ENCODE measurements at regions of chr3 and their contacts with region 1.

Region 1: DNA sequence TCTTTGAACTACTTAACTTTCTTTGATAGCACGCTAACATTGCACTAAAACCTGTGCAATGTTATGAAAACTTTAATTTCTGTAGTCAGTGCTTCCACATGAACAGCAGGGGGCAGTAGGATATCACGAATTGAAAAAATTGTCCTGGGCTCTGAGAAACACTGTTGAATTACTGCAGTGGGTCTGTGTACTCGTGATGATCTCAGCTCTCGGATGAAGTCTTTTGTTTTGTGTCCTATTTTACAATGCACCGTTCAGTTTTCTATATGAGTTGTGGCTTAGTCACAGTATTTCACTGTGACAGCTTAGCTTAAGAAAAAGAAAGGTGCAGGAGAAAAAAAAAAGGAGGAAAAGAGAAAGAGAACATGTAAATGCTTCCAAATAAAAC is 141.3 kb upstream of the CCDC54 start:
- DNase-seq: peak; percentile 74
- H3K4me3 ChIP-seq: peak overlapping the region; percentile 52
- H3K27ac ChIP-seq: no peak overlapping the region
- H3K27me3 ChIP-seq: no peaks in the 10 kb centered on the region
- CTCF ChIP-seq: peak; percentile 80

Region 2: GRCh38 chr3:107028086-107028485 is 207.8 kb before region 1 on chr3:
- CTCF ChIA-PET with region 1: no interaction called
- POLR2A ChIA-PET with region 1: no interaction called
- DNase-seq: no peak
- H3K4me3 ChIP-seq: no peak overlapping the region
- H3K27ac ChIP-seq: no peak overlapping the region
- H3K27me3 ChIP-seq: no peaks in the 10 kb centered on the region
- CTCF ChIP-seq: no peak

Region 3: DNA sequence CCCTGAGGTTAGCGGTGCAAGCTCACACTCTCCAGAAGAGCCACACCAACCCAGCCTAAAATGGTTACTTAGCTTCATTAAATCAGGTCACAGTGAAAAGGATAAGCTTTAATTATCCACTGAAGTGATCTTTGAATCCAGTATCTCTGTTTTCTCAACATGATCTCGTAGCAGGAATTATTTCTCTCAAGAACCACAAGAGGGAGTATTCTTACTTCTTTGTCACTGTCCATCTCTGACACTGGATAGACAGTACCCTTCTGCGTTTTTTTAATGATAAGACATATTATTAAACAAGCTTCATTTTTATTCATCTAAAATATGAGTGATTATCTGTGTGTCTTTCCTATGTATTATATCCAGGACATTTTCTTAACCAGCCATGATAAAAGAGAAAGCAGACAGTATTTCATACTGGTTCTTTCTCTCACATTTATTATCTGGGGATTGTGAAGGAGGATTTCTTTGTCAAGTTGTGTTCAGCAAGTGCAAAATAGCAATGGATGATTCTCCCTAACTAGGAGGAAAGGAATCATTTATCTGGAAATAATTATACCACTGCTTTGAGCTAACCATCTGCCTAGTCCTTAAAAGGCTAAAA is 36.0 kb after region 1 on chr3:
- CTCF ChIA-PET with region 1: interaction called, 30 read pairs
- POLR2A ChIA-PET with region 1: no interaction called
- DNase-seq: no peak
- H3K4me3 ChIP-seq: no peak overlapping the region
- H3K27ac ChIP-seq: no peak overlapping the region
- H3K27me3 ChIP-seq: no peaks in the 10 kb centered on the region
- CTCF ChIP-seq: peak; percentile 68

Region 4: GRCh38 chr3:107438067-107438466 is 202.1 kb after region 1 on chr3:
- CTCF ChIA-PET with region 1: no interaction called
- POLR2A ChIA-PET with region 1: no interaction called
- DNase-seq: no peak
- H3K4me3 ChIP-seq: no peak overlapping the region
- H3K27ac ChIP-seq: no peak overlapping the region
- H3K27me3 ChIP-seq: no peaks in the 10 kb centered on the region
- CTCF ChIP-seq: no peak

Region 5: GRCh38 chr3:107660306-107660976 is 424.5 kb after region 1 on chr3:
- CTCF ChIA-PET with region 1: interaction called, 21 read pairs
- POLR2A ChIA-PET with region 1: no interaction called
- DNase-seq: no peak
- H3K4me3 ChIP-seq: no peak overlapping the region
- H3K27ac ChIP-seq: no peak overlapping the region
- H3K27me3 ChIP-seq: no peaks in the 10 kb centered on the region
- CTCF ChIP-seq: peak; percentile 66

Region 6: DNA sequence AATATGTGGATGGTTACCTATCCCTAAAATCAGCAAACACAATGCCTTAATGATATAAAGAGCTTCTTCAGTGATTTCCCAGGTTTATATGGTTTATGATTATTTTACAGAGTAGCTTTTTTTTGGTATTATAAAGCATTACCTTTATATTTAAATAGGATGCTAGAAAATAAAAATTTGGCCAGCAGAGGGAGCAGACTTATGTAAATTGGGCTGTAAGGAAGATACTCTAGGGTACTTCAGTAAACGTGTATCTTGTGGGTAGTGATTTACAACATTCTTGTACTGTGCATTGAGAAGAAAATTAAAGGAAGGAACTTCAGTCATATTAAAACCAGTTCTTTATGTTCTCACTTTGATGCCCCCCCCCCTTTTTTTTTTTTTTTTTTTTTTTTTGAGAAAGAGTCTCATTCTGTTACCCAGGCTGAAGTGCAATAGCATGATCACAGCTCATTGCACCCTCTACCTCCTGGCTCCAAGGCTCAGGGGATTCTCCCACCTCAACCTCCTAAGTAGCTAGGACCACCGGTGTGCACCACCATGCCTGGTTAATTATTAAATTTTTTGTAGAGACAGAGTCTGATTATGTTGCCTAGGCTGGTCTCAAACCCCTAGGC is 454.7 kb after region 1 on chr3:
- CTCF ChIA-PET with region 1: interaction called, 13 read pairs
- POLR2A ChIA-PET with region 1: no interaction called
- DNase-seq: peak; percentile 41
- H3K4me3 ChIP-seq: no peak overlapping the region
- H3K27ac ChIP-seq: no peak overlapping the region
- H3K27me3 ChIP-seq: no peaks in the 10 kb centered on the region
- CTCF ChIP-seq: peak; percentile 64

Region 7: DNA sequence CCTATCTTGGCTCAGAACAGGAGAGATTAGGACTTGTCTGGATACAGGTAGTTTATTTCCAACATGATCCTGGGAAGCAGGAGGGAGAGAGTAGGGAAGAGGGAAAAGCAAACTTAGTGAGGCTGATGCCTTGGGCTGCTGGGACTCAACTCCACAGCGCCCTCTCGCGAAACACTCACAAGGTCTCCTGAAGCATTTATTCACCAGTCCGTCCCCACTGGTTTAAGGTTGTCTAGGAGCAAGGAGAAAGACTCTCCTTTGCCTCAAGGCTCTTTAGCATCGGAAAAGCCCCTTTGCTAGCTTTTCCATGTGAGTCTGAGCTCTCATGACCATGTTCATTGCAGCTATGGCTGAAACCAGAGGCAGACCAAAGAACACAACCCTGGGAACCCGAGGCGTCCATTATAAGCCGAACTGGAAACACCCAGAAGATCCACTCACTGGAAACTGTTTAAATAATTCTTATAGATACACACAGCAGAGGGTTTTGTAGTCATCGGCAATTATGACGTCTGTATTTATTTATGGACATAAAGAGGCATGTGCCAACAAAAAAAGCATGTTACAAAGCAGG is 610.4 kb after region 1 on chr3:
- CTCF ChIA-PET with region 1: interaction called, 21 read pairs
- POLR2A ChIA-PET with region 1: no interaction called
- DNase-seq: peak; percentile 21
- H3K4me3 ChIP-seq: no peak overlapping the region
- H3K27ac ChIP-seq: no peak overlapping the region
- H3K27me3 ChIP-seq: peaks cover 6% of the 10 kb centered on the region
- CTCF ChIP-seq: peak; percentile 72

Region 8: GRCh38 chr3:108477511-108478147 is 1241.7 kb after region 1 on chr3:
- CTCF ChIA-PET with region 1: interaction called, 35 read pairs
- POLR2A ChIA-PET with region 1: no interaction called
- DNase-seq: peak; percentile 49
- H3K4me3 ChIP-seq: no peak overlapping the region
- H3K27ac ChIP-seq: no peak overlapping the region
- H3K27me3 ChIP-seq: no peaks in the 10 kb centered on the region
- CTCF ChIP-seq: peak; percentile 81